AG04450 (cell line): ENCODE measurements at regions of chr6 and their contacts with region 1.

Region 1: DNA sequence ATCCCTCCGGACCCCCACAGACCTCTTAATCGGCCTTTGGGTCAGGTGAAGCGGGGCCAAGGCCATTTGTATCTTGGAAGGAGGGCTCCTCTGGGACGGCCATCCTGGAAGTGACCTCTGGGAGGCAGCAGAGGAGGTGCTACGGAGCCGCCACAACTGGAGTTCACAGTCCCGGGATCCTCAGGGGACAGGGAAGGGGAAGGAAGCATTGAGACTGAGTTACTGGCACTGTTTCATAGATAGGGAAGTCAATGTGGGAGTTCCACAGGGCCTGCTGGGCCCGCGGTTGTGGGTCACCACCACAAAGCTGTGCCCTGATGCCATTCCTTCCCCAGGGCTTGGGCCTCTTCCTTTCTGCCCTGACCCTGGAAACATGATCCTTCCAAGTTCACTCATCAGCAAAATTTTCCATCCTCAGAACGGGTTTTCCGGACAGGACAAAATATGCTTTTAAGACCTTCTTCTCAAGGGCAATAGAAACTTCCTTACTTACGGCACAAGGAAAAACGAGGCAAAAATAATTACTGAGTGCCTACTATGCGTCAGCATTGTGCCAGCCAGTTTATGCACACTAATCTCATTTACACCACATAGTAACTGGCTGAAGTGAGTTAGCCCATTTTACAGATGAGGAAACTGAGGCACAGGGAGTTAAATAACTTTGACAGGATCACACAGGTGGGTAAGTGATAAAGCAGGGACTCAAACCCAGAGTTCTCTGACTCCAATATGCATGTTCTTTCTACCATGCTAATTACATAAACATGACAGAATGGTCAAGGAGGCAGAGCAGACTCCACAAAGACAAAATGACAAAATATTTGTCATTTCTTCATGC is 143.8 kb downstream of the UNC5CL start:
- DNase-seq: peak; percentile 18
- H3K4me3 ChIP-seq: no peak overlapping the region
- H3K27ac ChIP-seq: no peak overlapping the region
- H3K27me3 ChIP-seq: peaks cover 21% of the 10 kb centered on the region
- CTCF ChIP-seq: peak; percentile 81

Region 2: GRCh38 chr6:40907198-40907704 is 12.1 kb after region 1 on chr6:
- CTCF ChIA-PET with region 1: interaction called, 17 read pairs
- POLR2A ChIA-PET with region 1: no interaction called
- DNase-seq: no peak
- H3K4me3 ChIP-seq: no peak overlapping the region
- H3K27ac ChIP-seq: no peak overlapping the region
- H3K27me3 ChIP-seq: no peaks in the 10 kb centered on the region
- CTCF ChIP-seq: no peak

Region 3: DNA sequence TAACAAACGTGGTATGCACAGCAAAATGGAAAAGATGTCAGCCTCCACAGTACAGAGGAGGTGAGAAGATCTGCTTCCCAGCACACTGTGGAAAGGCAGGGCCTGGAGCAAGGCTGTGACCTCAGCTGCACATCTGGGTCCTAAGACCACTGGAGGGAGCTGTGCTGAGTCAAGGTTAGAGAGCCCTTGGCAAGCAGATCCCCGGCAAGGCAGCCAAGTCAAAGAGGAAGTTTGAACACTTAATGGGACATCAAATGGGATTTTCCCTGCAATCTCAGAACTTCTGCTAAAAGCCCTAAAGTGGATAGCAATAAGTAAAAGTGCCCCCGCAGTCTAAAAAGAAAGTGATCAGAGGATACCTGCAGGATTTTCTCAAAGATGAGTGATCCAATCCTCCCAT is 104.4 kb after region 1 on chr6:
- CTCF ChIA-PET with region 1: interaction called, 12 read pairs
- POLR2A ChIA-PET with region 1: no interaction called
- DNase-seq: no peak
- H3K4me3 ChIP-seq: no peak overlapping the region
- H3K27ac ChIP-seq: no peak overlapping the region
- H3K27me3 ChIP-seq: peaks cover 14% of the 10 kb centered on the region
- CTCF ChIP-seq: peak; percentile 54

Region 4: GRCh38 chr6:41039060-41039998 is 144.1 kb after region 1 on chr6 and contains the start of gene UNC5CL:
- CTCF ChIA-PET with region 1: interaction called, 19 read pairs
- POLR2A ChIA-PET with region 1: no interaction called
- DNase-seq: no peak
- H3K4me3 ChIP-seq: no peak within 1 kb of the TSS
- H3K27ac ChIP-seq: no peak within 1 kb of the TSS
- H3K27me3 ChIP-seq: peaks cover 21% of the 10 kb centered on the region
- CTCF ChIP-seq: peak; percentile 67
- polyA plus RNA-seq, gene UNC5CL: 0.02 TPM in 2 replicates

Region 5: GRCh38 chr6:41066867-41067304 is 171.7 kb after region 1 on chr6:
- CTCF ChIA-PET with region 1: interaction called, 27 read pairs
- POLR2A ChIA-PET with region 1: interaction called, 4 read pairs
- DNase-seq: peak; percentile 73
- H3K4me3 ChIP-seq: no peak overlapping the region
- H3K27ac ChIP-seq: no peak overlapping the region
- H3K27me3 ChIP-seq: no peaks in the 10 kb centered on the region
- CTCF ChIP-seq: peak; percentile 86